ENCODE measurements at regions of chr3 and their contacts with region 1.

Region 1: GRCh38 chr3:22555753-22556435 is 647.2 kb upstream of the UBE2E2 start:
- DNase-seq: no peak
- H3K4me3 ChIP-seq: no peak overlapping the region
- H3K27ac ChIP-seq: no peak overlapping the region
- H3K27me3 ChIP-seq: no peaks in the 10 kb centered on the region
- CTCF ChIP-seq: no peak

Region 2: DNA sequence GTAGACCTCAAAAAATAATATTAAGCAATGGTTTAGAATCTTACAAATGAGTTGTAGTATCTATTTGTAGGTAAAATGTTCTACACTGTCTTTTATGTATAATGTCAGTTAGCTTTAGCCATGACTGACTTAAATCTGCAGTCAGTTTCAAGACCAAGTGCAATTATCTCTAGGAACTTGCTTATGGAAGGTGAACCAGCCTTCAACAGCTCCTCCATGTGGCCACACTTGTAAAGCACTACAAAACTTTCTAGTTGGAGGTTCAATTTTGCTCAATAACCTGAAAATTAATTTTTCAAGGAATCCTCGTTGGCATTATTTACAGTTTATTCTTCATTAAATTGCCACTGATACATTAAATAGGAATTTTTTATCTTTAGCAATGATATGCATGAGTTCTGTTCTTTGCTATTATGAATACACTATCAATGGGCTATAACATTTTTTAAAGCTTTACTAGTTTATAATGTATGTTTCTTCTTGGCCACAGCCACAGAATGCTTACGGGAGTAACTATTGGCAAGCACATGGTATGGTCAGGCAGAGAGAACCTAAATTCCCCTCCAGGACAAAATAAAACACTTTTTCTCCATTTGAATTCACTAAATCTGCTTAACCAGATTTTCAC is 331.9 kb after region 1 on chr3:
- intact Hi-C with region 1: loop called in 1 of 2 experiments (anchors 5 kb)
- DNase-seq: peak in 1 of 10 donors; percentile 10
- H3K4me3 ChIP-seq: no peak overlapping the region
- H3K27ac ChIP-seq: no peak overlapping the region
- H3K27me3 ChIP-seq: peaks cover 0 to 8% (median 0%) of the 10 kb centered on the region in 45 donors
- CTCF ChIP-seq: peak in 55 of 56 donors; percentile 23 to 73 (median 57)